ENCODE measurements at regions of chr1 and their contacts with region 1.

Region 1: GRCh38 chr1:203304919-203305808 is at the start of gene BTG2:
- DNase-seq: peak; percentile 86
- ATAC-seq: peak; percentile 79
- H3K4me3 Mint-ChIP-seq: peak within 1 kb of the TSS; percentile 92
- H3K27ac Mint-ChIP-seq: peak within 1 kb of the TSS; percentile 98
- H3K4me1 Mint-ChIP-seq: peaks cover 70% of the 10 kb centered on the region
- H3K27me3 Mint-ChIP-seq: no peaks in the 10 kb centered on the region
- CTCF ChIP-seq: no peak
- total RNA-seq, gene BTG2: 419 and 448 TPM in 2 replicates

Region 2: GRCh38 chr1:203244776-203245175 is 60.4 kb before region 1 on chr1:
- CTCF ChIA-PET with region 1: no interaction called
- POLR2A ChIA-PET with region 1: no interaction called
- intact Hi-C with region 1: no loop called
- DNase-seq: no peak
- ATAC-seq: no peak
- H3K4me3 Mint-ChIP-seq: no peak overlapping the region
- H3K27ac Mint-ChIP-seq: no peak overlapping the region
- H3K4me1 Mint-ChIP-seq: peaks cover 4% of the 10 kb centered on the region
- H3K27me3 Mint-ChIP-seq: peaks cover 28% of the 10 kb centered on the region
- CTCF ChIP-seq: no peak

Region 3: DNA sequence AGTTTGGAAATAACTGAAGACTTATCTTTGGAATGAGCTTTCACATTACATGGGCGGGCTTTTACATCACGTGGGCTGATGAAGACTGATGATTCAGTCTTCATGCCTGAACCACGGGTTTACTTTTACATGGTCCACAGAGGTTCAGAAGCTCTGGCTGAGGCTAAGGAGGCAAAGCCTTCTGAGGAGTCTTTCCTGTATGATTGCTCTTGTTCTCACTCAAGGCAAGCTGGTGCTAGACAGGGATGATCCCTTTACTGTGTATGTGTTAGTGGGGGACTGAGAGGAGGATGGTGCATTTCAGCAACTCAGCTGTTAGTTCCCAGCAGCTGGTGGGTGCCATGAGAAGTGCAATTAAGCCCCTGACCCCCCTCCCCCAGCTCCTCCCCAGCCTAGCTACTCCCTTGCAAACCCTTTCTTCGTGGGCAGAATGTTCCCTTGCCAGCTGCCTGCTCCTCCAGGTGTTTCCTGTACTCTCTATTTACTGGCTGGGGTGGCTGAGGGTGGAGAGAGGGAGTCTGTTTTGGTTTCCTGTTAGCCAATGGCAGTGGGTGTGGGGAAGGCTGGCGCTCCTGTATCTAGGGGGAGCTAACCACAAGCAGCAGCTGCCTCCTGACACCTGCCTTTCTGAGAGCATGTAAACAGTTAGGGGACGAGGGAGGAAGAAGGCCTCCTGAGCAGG is 15.6 kb after region 1 on chr1:
- CTCF ChIA-PET with region 1: interaction called, 168 read pairs
- POLR2A ChIA-PET with region 1: interaction called, 1,034 read pairs
- intact Hi-C with region 1: no loop called
- DNase-seq: peak; percentile 53
- ATAC-seq: peak; percentile 66
- H3K4me3 Mint-ChIP-seq: peak overlapping the region; percentile 72
- H3K27ac Mint-ChIP-seq: peak overlapping the region; percentile 96
- H3K4me1 Mint-ChIP-seq: peaks cover 90% of the 10 kb centered on the region
- H3K27me3 Mint-ChIP-seq: no peaks in the 10 kb centered on the region
- CTCF ChIP-seq: no peak

Region 4: DNA sequence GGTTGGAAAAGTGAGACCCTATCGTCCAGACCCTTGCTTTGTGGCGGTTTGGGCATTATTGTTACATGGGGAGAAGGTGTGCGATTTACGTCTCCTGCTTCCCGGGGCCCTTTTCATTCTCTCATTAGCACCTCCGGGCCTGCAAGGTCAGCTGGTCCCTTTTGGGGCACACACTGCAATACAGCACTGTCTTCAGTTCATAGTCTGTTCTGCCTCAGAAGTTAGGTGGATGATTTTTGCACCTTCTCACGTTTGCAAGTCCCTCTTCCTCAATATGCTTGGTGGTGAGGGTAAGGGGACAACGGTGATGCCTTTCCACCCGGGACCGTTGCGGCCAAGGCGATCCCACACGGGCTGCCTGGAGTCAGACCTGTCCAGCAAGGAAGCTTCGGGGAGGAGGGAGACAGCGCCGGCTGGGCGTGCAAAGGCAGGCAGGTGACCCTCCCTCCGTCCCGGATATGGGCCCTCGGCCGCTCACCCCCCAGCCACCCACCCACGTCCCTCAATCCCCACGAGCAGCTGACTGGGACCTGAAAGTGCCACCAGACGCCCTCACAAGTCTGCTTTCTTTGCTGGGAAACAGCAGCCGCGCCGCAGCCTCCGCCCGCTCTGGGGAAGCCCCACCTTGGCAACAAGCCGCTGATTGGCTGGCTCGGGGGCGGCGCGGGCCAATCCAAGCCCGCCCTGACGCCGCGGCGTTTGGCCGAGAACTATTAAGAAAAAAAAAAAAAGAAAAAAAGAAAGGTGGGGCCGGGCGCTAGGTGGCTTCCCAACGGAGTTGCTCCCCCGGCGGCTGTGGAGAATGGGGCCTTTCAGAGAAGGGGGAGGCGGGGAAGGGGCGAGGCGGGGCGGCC is 21.9 kb after region 1 on chr1:
- CTCF ChIA-PET with region 1: interaction called, 168 read pairs
- POLR2A ChIA-PET with region 1: interaction called, 1,034 read pairs
- intact Hi-C with region 1: loop called (anchors 1 kb)
- DNase-seq: peak; percentile 91
- ATAC-seq: peak; percentile 79
- H3K4me3 Mint-ChIP-seq: peak overlapping the region; percentile 84
- H3K27ac Mint-ChIP-seq: peak overlapping the region; percentile 96
- H3K4me1 Mint-ChIP-seq: peaks cover 77% of the 10 kb centered on the region
- H3K27me3 Mint-ChIP-seq: no peaks in the 10 kb centered on the region
- CTCF ChIP-seq: no peak

Region 5: DNA sequence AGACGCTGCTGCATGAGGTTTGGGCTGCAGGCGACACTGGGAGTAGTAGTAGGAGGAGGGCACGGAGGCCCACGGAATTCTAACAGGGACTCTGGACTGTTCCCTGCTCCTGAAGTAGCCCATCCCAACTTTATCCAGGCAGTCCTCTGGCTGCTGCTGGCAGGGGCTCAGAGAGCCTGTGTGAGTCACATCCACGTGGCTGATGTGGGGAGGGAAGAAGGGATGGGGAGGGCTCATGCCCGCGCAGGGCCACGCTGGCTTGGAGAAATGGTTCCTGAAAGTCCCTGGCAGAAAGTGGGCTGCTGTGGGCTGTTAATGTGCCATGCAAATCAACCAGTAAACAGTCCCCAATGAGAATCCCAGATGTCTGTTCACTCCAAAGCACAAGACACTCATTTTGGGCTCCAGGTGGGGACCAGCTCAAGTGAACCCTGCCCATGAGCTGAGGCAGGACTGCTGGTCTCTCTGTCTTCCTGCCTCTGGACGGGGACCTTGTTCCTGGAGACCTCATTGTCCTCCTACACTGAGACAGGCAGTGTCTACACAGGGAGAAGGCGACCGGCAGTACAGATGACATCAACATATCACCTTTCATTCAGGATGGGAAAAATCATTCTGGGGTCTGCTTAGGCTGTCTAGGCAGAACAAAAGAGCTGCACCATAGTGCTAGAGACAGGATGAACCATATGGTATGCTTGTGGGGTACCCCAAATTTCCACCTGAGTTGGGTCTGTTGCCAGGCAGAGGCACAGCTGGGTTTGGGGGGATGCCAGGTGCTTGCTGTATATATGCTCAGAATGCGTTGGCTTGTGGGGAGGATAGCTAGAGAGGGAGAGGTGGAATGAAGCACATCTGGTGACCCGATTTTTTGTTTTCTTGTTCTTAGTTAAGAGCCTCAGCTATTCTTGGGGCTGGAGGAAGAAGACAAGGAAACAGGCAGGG is 103.6 kb after region 1 on chr1:
- CTCF ChIA-PET with region 1: no interaction called
- POLR2A ChIA-PET with region 1: no interaction called
- intact Hi-C with region 1: no loop called
- DNase-seq: no peak
- ATAC-seq: no peak
- H3K4me3 Mint-ChIP-seq: no peak overlapping the region
- H3K27ac Mint-ChIP-seq: no peak overlapping the region
- H3K4me1 Mint-ChIP-seq: peaks cover 21% of the 10 kb centered on the region
- H3K27me3 Mint-ChIP-seq: peaks cover 10% of the 10 kb centered on the region
- CTCF ChIP-seq: no peak